ENCODE measurements at regions of chr2 and their contacts with region 1.

Region 1: DNA sequence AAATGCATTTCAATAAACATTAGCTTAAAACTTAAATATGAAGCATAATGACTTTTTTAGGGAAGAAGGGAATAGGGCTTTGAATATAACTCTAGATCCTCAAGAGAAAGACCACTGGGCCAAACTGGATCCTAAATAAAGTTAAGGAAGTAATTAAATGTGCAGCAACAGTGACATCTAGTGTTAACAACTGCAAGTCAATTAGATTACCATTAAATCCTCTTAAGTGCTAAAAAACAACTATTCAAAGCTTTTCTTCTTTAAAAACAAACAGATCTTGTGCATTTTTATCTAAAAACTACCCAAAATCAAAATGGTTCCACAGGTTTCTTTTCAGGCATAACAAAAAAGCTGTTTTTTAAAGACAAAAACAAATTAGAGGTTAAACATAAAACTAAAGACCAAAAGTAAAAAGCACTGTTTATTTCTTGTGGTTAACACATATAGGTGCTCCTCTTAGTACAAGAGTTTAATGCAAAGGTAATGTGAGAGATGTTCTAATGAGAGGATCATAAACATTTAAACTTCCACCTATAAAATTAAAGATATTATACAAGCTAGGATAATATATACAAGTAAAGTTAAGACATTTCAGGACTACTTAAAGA is 111.4 kb downstream of the THADA start:
- DNase-seq: no peak
- H3K4me3 ChIP-seq: no peak overlapping the region
- H3K27ac ChIP-seq: peak overlapping the region in 5 of 8 donors; percentile 15 to 70 (median 53)
- H3K4me1 ChIP-seq: peaks cover 13 to 57% (median 34%) of the 10 kb centered on the region in 6 donors
- H3K27me3 ChIP-seq: no peaks in the 10 kb centered on the region
- CTCF ChIP-seq: peak; percentile 44 to 86 (median 70)
- POLR2A ChIP-seq: no peak

Region 2: GRCh38 chr2:42828487-42829425 is 655.7 kb before region 1 on chr2:
- intact Hi-C with region 1: loop called (anchors 5 kb)
- DNase-seq: peak; percentile 93
- H3K4me3 ChIP-seq: no peak overlapping the region
- H3K27ac ChIP-seq: no peak overlapping the region
- H3K4me1 ChIP-seq: peaks cover 7 to 26% (median 17%) of the 10 kb centered on the region in 6 donors
- H3K27me3 ChIP-seq: no peaks in the 10 kb centered on the region
- CTCF ChIP-seq: peak; percentile 80 to 97 (median 90)
- POLR2A ChIP-seq: no peak

Region 3: DNA sequence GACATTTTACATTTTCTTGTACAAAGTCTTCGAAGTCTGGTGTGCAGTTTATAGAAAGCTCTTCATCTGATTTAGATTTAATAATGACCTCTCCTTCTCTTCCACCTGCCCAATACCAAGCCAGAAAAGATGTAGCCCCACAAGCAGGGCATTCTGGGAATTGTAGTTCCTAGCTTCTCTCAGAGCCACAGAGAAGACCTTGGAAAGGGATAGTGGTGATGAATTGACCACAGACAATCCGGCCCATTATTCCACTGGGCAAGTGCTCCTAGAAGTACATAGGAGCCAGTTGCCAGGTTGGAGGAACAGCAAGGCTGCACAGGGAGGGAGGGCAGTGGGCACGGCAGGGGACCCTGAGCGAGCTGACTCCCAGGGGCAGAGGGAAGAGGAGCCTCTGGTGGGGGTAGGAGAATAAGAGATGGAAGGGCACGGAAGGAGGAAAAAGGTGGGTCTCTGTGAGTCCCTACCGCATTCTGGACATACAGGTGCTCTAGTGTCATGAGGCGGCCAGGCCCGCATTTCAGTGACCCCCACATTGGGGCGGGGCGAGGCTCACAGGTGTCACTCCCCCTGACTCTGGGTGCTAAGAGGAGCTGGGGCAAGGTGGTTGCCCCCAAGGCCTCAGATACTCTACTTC is 539.5 kb before region 1 on chr2:
- intact Hi-C with region 1: loop called (anchors 5 kb)
- DNase-seq: no peak
- H3K4me3 ChIP-seq: no peak overlapping the region
- H3K27ac ChIP-seq: no peak overlapping the region
- H3K4me1 ChIP-seq: peaks cover 0 to 42% (median 17%) of the 10 kb centered on the region in 6 donors
- H3K27me3 ChIP-seq: no peaks in the 10 kb centered on the region
- CTCF ChIP-seq: no peak
- POLR2A ChIP-seq: no peak

Region 4: DNA sequence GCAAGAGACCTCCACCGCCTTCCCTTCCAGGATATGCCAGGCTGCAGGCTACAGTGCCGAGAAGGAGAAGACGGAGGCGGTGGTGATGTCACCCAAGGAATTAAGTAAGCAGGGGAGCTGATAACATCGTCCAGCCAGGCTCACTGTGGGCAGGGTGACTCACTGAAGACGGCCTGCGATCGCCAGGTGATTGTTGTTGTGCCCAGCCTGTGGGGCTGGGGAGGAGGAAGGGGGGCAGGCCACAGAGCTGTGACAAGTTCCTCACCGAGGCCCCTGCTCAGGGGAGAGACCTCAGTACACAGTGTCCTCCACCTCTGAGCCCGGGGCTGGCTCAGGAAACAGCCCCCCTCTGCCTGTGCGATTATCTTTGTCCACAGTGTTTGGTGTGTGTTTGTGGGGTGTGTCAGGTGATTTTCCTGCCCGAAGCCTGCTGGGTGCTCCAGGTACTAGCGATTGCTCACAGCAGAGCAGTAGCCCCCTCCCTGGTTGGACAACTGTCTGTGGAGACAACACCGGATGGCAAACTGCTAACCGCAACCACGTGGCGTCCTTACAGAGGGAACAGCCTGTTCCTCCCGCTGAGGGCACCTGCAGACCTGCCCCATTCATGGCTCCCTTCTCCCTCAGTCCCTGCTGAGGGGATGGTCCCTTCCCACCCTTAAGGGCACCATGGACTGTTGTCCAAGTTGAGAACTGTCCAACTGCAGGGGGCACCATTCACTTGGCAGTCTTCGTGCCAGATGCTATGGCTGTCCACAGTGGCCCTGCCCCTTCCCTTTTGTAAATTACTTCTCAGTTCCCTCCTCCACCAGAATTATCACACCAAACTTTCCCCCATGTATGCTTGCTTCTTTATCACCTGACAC is 353.2 kb before region 1 on chr2:
- intact Hi-C with region 1: loop called (anchors 10 kb)
- DNase-seq: peak; percentile 99
- H3K4me3 ChIP-seq: peak overlapping the region in 3 of 8 donors; percentile 2 to 49 (median 8)
- H3K27ac ChIP-seq: peak overlapping the region; percentile 85 to 99 (median 94)
- H3K4me1 ChIP-seq: peaks cover 78 to 100% (median 93%) of the 10 kb centered on the region in 6 donors
- H3K27me3 ChIP-seq: no peaks in the 10 kb centered on the region
- CTCF ChIP-seq: peak in 10 of 11 experiments; percentile 58 to 91 (median 81)
- POLR2A ChIP-seq: peak in 1 of 3 donors; percentile 10

Region 5: GRCh38 chr2:43233218-43234212 is 250.9 kb before region 1 on chr2:
- intact Hi-C with region 1: loop called (anchors 5 kb)
- DNase-seq: no peak
- H3K4me3 ChIP-seq: peak overlapping the region in 1 of 8 donors; percentile 10
- H3K27ac ChIP-seq: peak overlapping the region in 7 of 8 donors; percentile 37 to 86 (median 61)
- H3K4me1 ChIP-seq: peaks cover 20 to 94% (median 46%) of the 10 kb centered on the region in 6 donors
- H3K27me3 ChIP-seq: no peaks in the 10 kb centered on the region
- CTCF ChIP-seq: no peak
- POLR2A ChIP-seq: no peak

Region 6: GRCh38 chr2:43542285-43542937 is 58.0 kb after region 1 on chr2:
- intact Hi-C with region 1: loop called (anchors 10 kb)
- DNase-seq: no peak
- H3K4me3 ChIP-seq: no peak overlapping the region
- H3K27ac ChIP-seq: peak overlapping the region in 1 of 8 donors; percentile 75
- H3K4me1 ChIP-seq: peaks cover 3 to 52% (median 32%) of the 10 kb centered on the region in 6 donors
- H3K27me3 ChIP-seq: no peaks in the 10 kb centered on the region
- CTCF ChIP-seq: peak; percentile 46 to 79 (median 71)
- POLR2A ChIP-seq: no peak

Region 7: GRCh38 chr2:43611987-43612894 is 127.8 kb after region 1 on chr2:
- intact Hi-C with region 1: no loop called
- DNase-seq: no peak
- H3K4me3 ChIP-seq: no peak overlapping the region
- H3K27ac ChIP-seq: no peak overlapping the region
- H3K4me1 ChIP-seq: peaks cover 0 to 13% (median 3%) of the 10 kb centered on the region in 6 donors
- H3K27me3 ChIP-seq: no peaks in the 10 kb centered on the region
- CTCF ChIP-seq: peak; percentile 51 to 83 (median 74)
- POLR2A ChIP-seq: no peak

Region 8: DNA sequence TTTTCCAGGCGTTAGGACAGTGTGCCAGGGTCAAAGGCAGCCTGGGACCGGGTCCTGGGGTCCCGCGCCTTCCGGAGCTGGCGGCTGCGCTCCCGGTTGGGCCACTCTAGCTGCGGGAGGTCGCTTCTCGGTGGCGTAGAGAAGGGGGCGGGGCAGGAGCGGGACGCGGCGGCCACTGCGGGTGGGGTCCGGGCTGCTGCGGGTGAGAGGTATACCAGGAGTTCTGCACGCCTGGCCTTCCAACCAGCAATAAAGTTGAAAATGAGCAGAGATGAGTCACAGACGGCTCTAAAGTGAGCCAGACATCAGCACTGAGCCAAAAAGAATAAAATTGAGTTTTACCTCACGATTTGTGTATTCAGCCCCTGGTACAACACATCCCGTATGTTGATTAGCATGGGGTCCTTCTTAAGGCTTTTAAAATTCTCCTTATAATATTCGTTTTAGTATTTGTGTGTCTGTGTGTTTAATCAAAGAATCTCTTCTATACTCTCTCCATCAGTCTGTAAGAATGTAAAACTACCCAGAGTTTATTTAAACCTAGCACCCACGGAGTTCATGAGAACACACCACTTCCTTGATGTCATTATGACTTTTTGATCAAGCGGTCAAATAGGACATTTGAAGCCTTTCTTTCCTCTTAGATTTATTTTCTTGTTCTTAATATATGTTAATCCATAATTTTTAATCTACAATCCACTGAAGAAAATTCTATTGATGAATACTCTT is 192.1 kb after region 1 on chr2 and contains the start of gene C1GALT1C1L:
- intact Hi-C with region 1: no loop called
- DNase-seq: no peak
- H3K4me3 ChIP-seq: peak within 1 kb of the TSS; percentile 13 to 68 (median 32)
- H3K27ac ChIP-seq: peak within 1 kb of the TSS in 1 of 8 donors; percentile 23
- H3K4me1 ChIP-seq: peaks cover 0 to 12% (median 0%) of the 10 kb centered on the region in 6 donors
- H3K27me3 ChIP-seq: peaks cover 0 to 26% (median 0%) of the 10 kb centered on the region in 7 donors
- CTCF ChIP-seq: no peak
- POLR2A ChIP-seq: no peak
- total RNA-seq, gene C1GALT1C1L: 0.37 to 0.85 (median 0.65) TPM in 6 of 7 donors, not detected in the other